Right lobe of liver (tissue), 6 donors: ENCODE measurements at regions of chr4 and their contacts with region 1.

Region 1: DNA sequence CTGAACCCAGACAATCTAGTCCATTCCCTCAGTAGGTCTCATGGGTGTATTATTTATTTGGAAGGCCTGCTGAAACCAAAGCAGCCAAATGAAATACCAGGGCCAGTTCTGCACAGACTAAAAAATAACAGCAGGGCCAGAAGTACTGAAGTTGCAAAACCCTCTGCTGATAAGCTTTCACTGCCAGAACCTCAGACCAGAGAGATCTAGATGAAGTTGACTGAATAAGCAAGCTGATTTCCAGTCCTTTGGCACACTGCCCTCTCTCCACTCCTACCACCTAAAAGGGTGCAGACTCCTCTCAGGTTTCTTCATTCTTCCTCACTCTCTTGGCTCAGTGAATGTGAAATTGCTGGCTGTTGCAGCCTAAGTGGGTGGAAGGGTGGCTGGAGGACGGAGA is 276.7 kb upstream of the KLF3 start:
- DNase-seq: peak; percentile 55 to 91 (median 67)
- ATAC-seq: peak; percentile 67 to 80 (median 72)
- H3K4me3 ChIP-seq: no peak overlapping the region
- H3K27ac ChIP-seq: peak overlapping the region in 2 of 3 donors; percentile 60 to 74
- H3K4me1 ChIP-seq: peaks cover 0 to 44% (median 19%) of the 10 kb centered on the region in 4 donors
- H3K27me3 ChIP-seq: no peaks in the 10 kb centered on the region
- CTCF ChIP-seq: no peak
- POLR2A ChIP-seq: no peak

Region 2: GRCh38 chr4:38179690-38180377 is 207.5 kb before region 1 on chr4:
- intact Hi-C with region 1: no loop called
- DNase-seq: peak; percentile 69 to 86 (median 73)
- ATAC-seq: peak; percentile 75 to 84 (median 79)
- H3K4me3 ChIP-seq: no peak overlapping the region
- H3K27ac ChIP-seq: peak overlapping the region in 2 of 3 donors; percentile 1 to 15
- H3K4me1 ChIP-seq: peaks cover 0 to 36% (median 16%) of the 10 kb centered on the region in 4 donors
- H3K27me3 ChIP-seq: no peaks in the 10 kb centered on the region
- CTCF ChIP-seq: peak; percentile 93 to 96 (median 94)
- POLR2A ChIP-seq: no peak

Region 3: GRCh38 chr4:38319456-38320342 is 67.6 kb before region 1 on chr4:
- intact Hi-C with region 1: loop called in 1 of 2 experiments (anchors 10 kb)
- DNase-seq: peak; percentile 91 to 97 (median 95)
- ATAC-seq: peak; percentile 88 to 93 (median 90)
- H3K4me3 ChIP-seq: peak overlapping the region; percentile 19 to 47 (median 41)
- H3K27ac ChIP-seq: peak overlapping the region; percentile 73 to 81 (median 74)
- H3K4me1 ChIP-seq: peaks cover 0 to 20% (median 8%) of the 10 kb centered on the region in 4 donors
- H3K27me3 ChIP-seq: no peaks in the 10 kb centered on the region
- CTCF ChIP-seq: peak; percentile 98
- POLR2A ChIP-seq: no peak

Region 4: GRCh38 chr4:38663801-38664705 is 276.7 kb after region 1 on chr4 and contains the start of gene KLF3:
- intact Hi-C with region 1: loop called in 1 of 2 experiments (anchors 10 kb)
- DNase-seq: peak; percentile 98
- ATAC-seq: peak; percentile 75 to 90 (median 82)
- H3K4me3 ChIP-seq: peak within 1 kb of the TSS; percentile 82 to 94 (median 91)
- H3K27ac ChIP-seq: peak within 1 kb of the TSS; percentile 95 to 98 (median 96)
- H3K4me1 ChIP-seq: peaks cover 0 to 26% (median 9%) of the 10 kb centered on the region in 4 donors
- H3K27me3 ChIP-seq: no peaks in the 10 kb centered on the region
- CTCF ChIP-seq: no peak
- POLR2A ChIP-seq: peak; percentile 97
- total RNA-seq, gene KLF3: 21.3 to 37.6 (median 26.8) TPM

Region 5: GRCh38 chr4:38856524-38857337 is 469.4 kb after region 1 on chr4 and contains the start of gene TLR6:
- intact Hi-C with region 1: no loop called
- DNase-seq: peak in 1 of 3 donors; percentile 64
- ATAC-seq: peak; percentile 83 to 90 (median 86)
- H3K4me3 ChIP-seq: peak within 1 kb of the TSS; percentile 0 to 35 (median 18)
- H3K27ac ChIP-seq: peak within 1 kb of the TSS; percentile 22 to 61 (median 42)
- H3K4me1 ChIP-seq: peaks cover 0 to 4% (median 0%) of the 10 kb centered on the region in 4 donors
- H3K27me3 ChIP-seq: no peaks in the 10 kb centered on the region
- CTCF ChIP-seq: peak; percentile 81 to 83 (median 82)
- POLR2A ChIP-seq: no peak
- total RNA-seq, gene TLR6: 1.2 to 3.4 (median 2.4) TPM